Caco-2 (cell line): ENCODE measurements at regions of chr1 and their contacts with region 1.

Region 1: DNA sequence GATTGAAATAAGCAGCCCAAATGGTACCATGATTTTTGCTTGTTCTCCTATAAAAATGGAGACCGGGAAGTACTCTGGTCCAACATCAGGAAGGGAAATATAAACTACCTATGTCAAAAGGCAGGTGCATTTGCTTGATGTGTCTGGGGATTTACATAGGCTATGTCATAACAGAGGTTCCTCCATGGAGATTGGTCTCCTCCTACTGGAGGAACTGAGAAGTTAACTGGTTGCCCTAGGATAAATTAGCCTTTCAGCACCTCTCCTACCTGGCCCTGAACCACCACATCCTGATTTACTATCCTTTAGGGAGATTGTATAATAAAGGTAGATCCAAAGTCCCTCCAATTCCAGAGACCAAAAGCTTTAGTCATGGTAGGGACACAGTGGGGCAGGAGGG is 1109.3 kb upstream of the B3GALT2 start:
- DNase-seq: peak in 1 of 2 experiments; percentile 30
- H3K4me3 ChIP-seq: no peak overlapping the region
- H3K4me3 Mint-ChIP-seq: no peak overlapping the region
- H3K27ac Mint-ChIP-seq: no peak overlapping the region
- H3K4me1 ChIP-seq: no peaks in the 10 kb centered on the region
- H3K4me1 Mint-ChIP-seq: no peaks in the 10 kb centered on the region
- H3K27me3 ChIP-seq: no peaks in the 10 kb centered on the region
- H3K27me3 Mint-ChIP-seq: peaks cover 3% of the 10 kb centered on the region
- CTCF ChIP-seq: peak; percentile 48 to 49

Region 2: DNA sequence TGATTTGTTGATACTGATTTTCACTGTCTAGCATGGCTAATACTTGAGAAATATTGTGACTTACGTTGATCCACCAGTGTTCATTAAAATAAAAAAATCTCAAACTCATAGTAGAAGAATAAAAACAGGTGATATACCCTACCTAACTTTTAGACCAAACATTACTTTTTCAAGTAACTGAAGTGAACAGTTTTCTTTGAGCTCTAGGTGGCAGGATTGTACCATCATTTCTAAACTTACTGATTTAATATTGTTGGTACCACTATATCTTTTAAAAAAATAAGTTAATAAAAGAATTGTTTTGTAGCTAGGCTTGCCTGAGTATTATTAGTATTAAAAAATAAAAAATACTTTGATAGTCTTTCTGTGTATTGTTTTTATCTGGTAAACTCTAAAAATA is 1152.4 kb before region 1 on chr1:
- CTCF ChIA-PET with region 1: no interaction called
- POLR2A ChIA-PET with region 1: no interaction called
- intact Hi-C with region 1: loop called (anchors 5 kb)
- DNase-seq: no peak
- H3K4me3 ChIP-seq: no peak overlapping the region
- H3K4me3 Mint-ChIP-seq: no peak overlapping the region
- H3K27ac Mint-ChIP-seq: no peak overlapping the region
- H3K4me1 ChIP-seq: no peaks in the 10 kb centered on the region
- H3K4me1 Mint-ChIP-seq: no peaks in the 10 kb centered on the region
- H3K27me3 ChIP-seq: no peaks in the 10 kb centered on the region
- H3K27me3 Mint-ChIP-seq: no peaks in the 10 kb centered on the region
- CTCF ChIP-seq: peak in 1 of 2 experiments; percentile 20

Region 3: GRCh38 chr1:193406901-193407300 is 888.8 kb before region 1 on chr1:
- CTCF ChIA-PET with region 1: no interaction called
- POLR2A ChIA-PET with region 1: no interaction called
- intact Hi-C with region 1: loop called (anchors 2 kb)
- DNase-seq: peak in 1 of 2 experiments; percentile 13
- H3K4me3 ChIP-seq: no peak overlapping the region
- H3K4me3 Mint-ChIP-seq: no peak overlapping the region
- H3K27ac Mint-ChIP-seq: no peak overlapping the region
- H3K4me1 ChIP-seq: peaks cover 7% of the 10 kb centered on the region
- H3K4me1 Mint-ChIP-seq: peaks cover 10% of the 10 kb centered on the region
- H3K27me3 ChIP-seq: no peaks in the 10 kb centered on the region
- H3K27me3 Mint-ChIP-seq: no peaks in the 10 kb centered on the region
- CTCF ChIP-seq: peak; percentile 58 to 68

Region 4: GRCh38 chr1:194102606-194103005 is 193.1 kb before region 1 on chr1:
- CTCF ChIA-PET with region 1: no interaction called
- POLR2A ChIA-PET with region 1: no interaction called
- intact Hi-C with region 1: loop called (anchors 1 kb)
- DNase-seq: no peak
- H3K4me3 ChIP-seq: no peak overlapping the region
- H3K4me3 Mint-ChIP-seq: no peak overlapping the region
- H3K27ac Mint-ChIP-seq: no peak overlapping the region
- H3K4me1 ChIP-seq: no peaks in the 10 kb centered on the region
- H3K4me1 Mint-ChIP-seq: no peaks in the 10 kb centered on the region
- H3K27me3 ChIP-seq: no peaks in the 10 kb centered on the region
- H3K27me3 Mint-ChIP-seq: no peaks in the 10 kb centered on the region
- CTCF ChIP-seq: no peak